ENCODE measurements at regions of chr17 and their contacts with region 1.

Region 1: DNA sequence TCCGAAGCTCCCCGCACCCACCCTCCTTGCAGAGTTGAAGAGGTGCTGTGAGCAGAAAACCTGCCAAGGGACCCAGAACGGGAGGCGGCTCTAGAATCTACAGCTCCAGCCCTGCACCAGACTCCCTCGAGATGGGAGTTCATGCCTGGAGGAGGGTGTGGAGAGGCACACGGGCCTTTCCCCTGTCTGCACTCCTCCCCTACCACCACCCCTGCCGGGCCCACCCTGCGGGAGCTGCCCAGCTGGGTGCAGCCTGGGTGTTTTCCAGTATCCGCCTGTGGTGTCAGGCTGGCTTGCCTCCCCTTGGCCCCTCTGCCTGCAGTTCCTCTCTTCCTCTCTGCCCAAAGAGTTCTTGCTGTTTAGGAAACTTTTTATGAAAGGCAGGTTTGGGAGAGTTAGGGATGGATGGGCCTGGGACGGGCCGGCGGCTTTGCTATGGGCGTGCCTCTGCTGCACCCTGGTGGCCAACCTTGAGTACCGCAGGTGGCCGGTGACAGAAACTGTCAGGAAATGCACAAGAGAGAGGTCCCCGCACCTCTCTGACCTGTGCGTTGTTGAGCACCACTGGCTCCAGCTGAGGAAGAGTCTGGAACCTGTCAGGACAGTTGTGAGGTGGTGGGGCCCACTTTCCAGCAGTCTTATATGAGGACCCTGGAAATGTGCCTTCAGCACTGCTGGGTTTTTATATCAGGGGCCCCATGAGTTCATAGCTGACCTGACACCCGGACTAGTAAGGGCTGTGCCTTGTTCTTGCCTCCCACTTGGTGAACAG is 354.1 kb downstream of the SEC14L1 start:
- DNase-seq: peak; percentile 89
- ATAC-seq: peak; percentile 76

Region 2: DNA sequence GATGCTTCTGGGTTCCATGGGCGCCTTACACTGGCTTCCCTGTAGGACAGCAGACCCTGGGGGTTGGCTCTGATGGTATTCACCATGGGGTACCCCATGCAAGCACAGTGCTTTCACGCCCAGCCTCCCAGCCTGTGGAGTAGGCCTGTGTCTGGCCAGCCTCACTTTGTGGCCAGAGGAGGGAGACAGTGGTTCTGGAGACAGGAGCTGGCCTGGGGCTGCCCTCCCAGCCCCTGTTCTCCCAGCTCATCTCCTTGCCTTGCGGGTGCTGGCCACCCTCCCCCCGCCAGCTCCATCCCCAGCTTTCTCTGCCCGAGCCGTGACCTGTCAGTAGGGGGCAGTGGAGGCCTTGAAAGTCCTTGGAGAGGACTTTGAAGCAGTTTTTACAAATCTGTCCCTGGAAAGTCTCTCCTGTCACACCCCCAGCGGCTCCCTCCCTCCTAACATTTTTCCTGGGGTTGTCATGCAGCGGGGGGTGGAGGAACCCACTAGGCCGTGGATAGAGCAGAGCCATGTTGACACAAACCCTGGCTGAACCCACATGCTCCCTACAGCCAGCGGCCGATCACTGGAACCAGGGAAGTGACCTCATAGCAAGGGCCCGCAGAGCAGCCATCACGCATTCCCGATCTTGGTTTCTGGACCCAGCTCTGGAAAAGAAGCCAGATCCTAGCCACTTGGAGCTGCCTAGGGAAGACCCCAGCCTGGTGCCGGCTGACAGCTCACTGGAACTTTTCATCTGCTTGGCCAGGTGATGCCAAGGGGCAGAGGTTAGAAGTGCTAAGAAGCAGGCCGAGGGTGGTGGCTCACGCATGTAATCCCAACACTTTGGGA is 64.7 kb before region 1 on chr17:
- intact Hi-C with region 1: loop called (anchors 5 kb)
- DNase-seq: peak; percentile 96
- ATAC-seq: peak; percentile 81

Region 3: DNA sequence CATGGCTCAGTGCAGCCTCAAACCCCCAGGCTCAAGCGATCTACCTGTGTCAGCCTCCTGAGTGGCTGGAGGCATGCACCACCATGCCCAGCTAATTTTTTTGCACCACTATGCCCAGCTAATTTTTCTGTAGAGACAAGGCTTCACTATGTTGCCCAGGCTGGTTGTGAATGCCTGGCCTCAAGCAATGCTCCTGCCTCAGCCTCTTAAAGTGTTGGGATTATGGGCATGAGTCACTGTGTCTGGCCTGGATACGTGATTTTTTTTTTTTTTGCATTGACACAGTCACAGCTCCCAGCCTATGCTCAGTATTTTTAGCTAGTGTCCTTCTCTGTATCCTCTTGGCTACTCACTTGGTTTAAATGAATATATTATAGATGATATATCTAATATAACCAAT is 86.6 kb after region 1 on chr17:
- intact Hi-C with region 1: no loop called
- DNase-seq: no peak
- ATAC-seq: no peak

Measured in sciatic nerve (tissue), 2 donors.